ENCODE measurements at regions of chr4 and their contacts with region 1.

Region 1: GRCh38 chr4:24912252-24913118 is at the start of gene CCDC149:
- DNase-seq: peak; percentile 76 to 84
- H3K4me3 ChIP-seq: peak within 1 kb of the TSS; percentile 58
- H3K27ac ChIP-seq: peak within 1 kb of the TSS; percentile 40; the same call in 1 of the 2 replicates
- H3K4me1 ChIP-seq: peaks cover 13% of the 10 kb centered on the region
- H3K27me3 ChIP-seq: no peaks in the 10 kb centered on the region
- CTCF ChIP-seq: no peak
- total RNA-seq, gene CCDC149: 8.1 and 9.8 TPM in 2 replicates

Region 2: DNA sequence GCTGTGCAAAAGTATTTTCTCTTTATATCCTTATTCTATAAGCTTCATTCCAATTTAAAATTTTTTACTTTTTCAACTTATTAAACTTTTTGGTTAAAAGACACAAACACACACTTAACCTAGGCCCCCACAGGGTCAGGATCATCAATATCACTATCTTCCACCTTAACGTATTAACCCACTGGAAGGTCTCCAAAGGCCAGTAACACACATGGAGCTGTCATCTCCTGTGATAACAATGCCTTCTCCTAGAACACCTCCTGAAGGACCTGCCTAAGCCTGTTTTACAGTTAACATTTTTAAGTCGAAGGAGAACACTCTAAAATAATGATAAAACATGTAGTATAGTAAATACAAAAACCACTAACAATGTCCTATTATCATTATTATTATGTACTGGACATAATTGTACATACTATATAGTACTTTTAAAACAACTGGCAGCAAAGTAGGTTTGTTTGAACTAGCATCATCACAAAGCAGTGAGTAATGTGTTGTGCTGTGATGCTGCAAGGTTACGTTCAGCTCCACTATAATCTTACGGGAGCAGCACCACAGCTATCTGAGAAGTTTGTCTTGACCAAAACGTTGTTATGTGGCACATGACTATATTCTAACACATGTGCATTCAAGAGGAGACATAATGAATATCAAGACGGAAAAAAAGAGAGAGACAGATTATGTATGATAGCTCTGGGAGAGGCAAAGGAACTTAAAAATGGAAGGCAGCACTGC is 361.9 kb before region 1 on chr4:
- CTCF ChIA-PET with region 1: no interaction called
- POLR2A ChIA-PET with region 1: interaction called, 21 read pairs
- intact Hi-C with region 1: no loop called
- DNase-seq: no peak
- H3K4me3 ChIP-seq: no peak overlapping the region
- H3K27ac ChIP-seq: no peak overlapping the region
- H3K4me1 ChIP-seq: 0 out of 2 replicates have a peak, but pooled peaks cover 11% of the 10 kb centered on the region
- H3K27me3 ChIP-seq: no peaks in the 10 kb centered on the region
- CTCF ChIP-seq: no peak

Region 3: DNA sequence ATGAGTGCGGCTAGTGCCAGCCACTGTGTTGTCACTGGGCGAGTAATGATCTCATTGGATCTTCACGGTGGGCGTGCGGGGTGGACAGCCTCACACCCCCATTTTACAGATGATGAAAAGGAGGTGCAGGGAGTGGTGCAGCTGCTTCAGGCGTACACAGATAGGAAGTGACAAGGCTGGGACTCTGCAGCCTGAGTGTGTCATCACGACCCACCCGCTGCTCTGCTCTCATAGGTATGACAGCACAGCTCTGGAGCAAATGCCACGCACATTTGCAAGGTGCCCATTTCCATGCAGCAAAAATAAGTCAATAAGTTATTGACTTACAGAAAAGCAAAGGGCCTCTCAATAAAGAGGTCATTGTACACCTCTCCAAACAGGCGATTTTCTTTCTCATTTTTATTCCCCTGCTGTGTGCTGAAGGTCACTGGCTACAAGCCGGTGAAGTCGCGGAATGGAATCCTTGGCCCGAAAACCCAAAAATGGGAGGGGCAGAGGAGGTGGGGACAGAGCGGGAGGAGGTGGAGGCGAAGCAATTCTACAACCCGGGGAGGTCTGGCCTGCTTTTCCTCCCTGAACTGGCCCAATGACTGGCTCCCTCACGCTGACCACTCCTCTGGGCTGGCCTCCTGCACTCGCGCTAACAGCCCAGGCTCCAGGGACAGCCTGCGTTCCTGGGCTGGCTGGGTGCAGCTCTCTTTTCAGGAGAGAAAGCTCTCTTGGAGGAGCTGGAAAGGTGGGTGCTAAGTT is 117.4 kb before region 1 on chr4 and contains the start of gene SOD3:
- CTCF ChIA-PET with region 1: no interaction called
- POLR2A ChIA-PET with region 1: no interaction called
- intact Hi-C with region 1: loop called (anchors 10 kb)
- DNase-seq: peak; percentile 78 to 86
- H3K4me3 ChIP-seq: peak within 1 kb of the TSS; percentile 34; the same call in 1 of the 2 replicates
- H3K27ac ChIP-seq: peak within 1 kb of the TSS; percentile 25; the same call in 1 of the 2 replicates
- H3K4me1 ChIP-seq: peaks cover 12% of the 10 kb centered on the region
- H3K27me3 ChIP-seq: no peaks in the 10 kb centered on the region
- CTCF ChIP-seq: no peak
- total RNA-seq, gene SOD3: 6.3 and 7.6 TPM in 2 replicates

Region 4: GRCh38 chr4:24930151-24930550 is 17.7 kb after region 1 on chr4:
- CTCF ChIA-PET with region 1: no interaction called
- POLR2A ChIA-PET with region 1: no interaction called
- intact Hi-C with region 1: no loop called
- DNase-seq: no peak
- H3K4me3 ChIP-seq: no peak overlapping the region
- H3K27ac ChIP-seq: no peak overlapping the region
- H3K4me1 ChIP-seq: no peaks in the 10 kb centered on the region
- H3K27me3 ChIP-seq: no peaks in the 10 kb centered on the region
- CTCF ChIP-seq: no peak

Region 5: DNA sequence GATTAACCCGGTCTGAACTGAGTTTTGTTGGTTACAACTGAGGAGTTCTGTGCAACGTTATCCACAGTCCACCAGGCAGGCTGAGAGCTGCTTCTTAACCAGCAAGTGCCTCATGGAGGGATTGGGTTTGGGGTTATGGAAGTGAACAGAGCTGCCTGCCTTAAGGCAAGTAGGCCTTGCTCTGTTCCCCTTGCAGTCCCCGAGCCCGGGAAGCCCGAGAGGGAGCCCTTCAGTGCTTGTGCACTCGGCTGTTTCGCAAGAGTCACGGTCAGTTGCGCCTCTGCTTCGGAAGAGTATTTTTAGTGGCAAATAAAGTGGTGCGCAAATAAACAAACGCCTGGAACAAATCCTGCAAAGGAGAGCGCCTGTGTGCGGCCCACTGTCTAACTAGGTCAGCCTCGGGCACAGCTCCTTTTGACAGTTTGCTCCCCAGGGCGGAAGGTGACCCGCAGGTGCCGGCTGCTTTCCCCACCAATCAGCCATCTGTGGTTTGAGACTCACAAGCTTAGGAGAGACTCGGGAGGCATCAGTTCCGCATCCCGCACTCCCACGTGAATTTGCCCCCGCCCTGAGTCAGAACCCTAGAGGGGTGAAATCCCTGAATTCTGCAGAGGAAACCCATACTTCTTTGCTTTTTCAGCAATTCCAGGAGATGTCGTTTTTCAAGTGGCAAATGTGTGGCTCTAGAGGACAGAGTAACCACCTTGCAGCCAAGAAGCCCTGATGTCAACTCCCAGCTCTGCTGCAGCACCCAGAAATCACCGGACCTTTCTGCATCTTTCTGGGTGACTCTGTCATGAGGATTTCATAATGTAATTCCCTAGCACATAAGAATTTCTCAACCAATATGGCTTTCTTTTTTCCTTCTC is 61.5 kb after region 1 on chr4:
- CTCF ChIA-PET with region 1: no interaction called
- POLR2A ChIA-PET with region 1: no interaction called
- intact Hi-C with region 1: loop called (anchors 5 kb)
- DNase-seq: peak in 1 of 2 experiments; percentile 8
- H3K4me3 ChIP-seq: no peak overlapping the region
- H3K27ac ChIP-seq: no peak overlapping the region
- H3K4me1 ChIP-seq: peaks cover 37% of the 10 kb centered on the region
- H3K27me3 ChIP-seq: no peaks in the 10 kb centered on the region
- CTCF ChIP-seq: no peak

Measured in PC-9 (cell line).